ENCODE measurements at regions of chr10 and their contacts with region 1.

Region 1: GRCh38 chr10:119686439-119687191 is 35.4 kb downstream of the BAG3 start:
- DNase-seq: peak; percentile 94
- H3K4me3 ChIP-seq: peak overlapping the region in 2 of 3 experiments; percentile 20 to 26
- H3K27ac ChIP-seq: peak overlapping the region; percentile 88
- H3K4me1 ChIP-seq: peaks cover 13% of the 10 kb centered on the region
- H3K27me3 ChIP-seq: no peaks in the 10 kb centered on the region
- CTCF ChIP-seq: peak; percentile 89
- POLR2A ChIP-seq: peak; percentile 66

Region 2: DNA sequence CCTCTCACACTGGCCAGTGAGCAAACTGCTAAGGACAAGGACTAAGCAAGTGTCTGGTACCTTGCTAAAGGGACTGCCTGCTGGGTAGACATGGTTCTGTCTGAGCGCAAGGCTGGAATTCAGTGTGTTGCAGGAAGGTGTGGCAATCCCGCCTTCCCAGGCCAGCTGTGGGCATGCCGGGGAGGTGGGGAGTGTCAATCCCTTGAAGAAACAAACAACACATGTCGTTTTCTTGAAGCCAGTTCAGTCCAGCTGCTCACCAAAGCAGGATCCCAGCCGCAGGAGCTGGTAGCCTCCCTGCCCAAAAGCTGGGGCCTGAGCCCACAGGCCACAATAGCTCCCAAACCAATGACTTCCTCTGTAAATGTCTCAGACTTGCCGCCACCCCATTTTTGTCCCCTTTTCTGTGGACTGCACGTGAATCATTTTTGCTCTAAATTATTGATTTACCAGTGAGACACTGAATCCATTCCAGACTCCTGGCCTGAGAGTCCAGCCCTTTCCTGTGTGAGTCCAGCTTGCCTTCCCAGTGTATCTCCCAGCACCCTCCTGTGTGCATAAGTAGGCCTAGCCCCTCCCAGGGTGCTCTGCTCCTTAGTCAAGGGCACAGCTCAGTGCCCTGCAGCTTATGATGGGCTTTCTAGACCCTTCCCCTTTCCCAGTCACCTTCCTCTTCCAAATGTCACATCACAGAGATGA is 310.9 kb before region 1 on chr10:
- CTCF ChIA-PET with region 1: no interaction called
- POLR2A ChIA-PET with region 1: no interaction called
- dilution Hi-C with region 1: no loop called
- intact Hi-C with region 1: no loop called
- DNase-seq: peak; percentile 7
- H3K4me3 ChIP-seq: no peak overlapping the region
- H3K27ac ChIP-seq: no peak overlapping the region
- H3K4me1 ChIP-seq: peaks cover 9% of the 10 kb centered on the region
- H3K27me3 ChIP-seq: no peaks in the 10 kb centered on the region
- CTCF ChIP-seq: no peak
- POLR2A ChIP-seq: no peak

Region 3: GRCh38 chr10:119608316-119609155 is 78.1 kb before region 1 on chr10:
- CTCF ChIA-PET with region 1: interaction called, 5 read pairs
- POLR2A ChIA-PET with region 1: no interaction called
- dilution Hi-C with region 1: no loop called
- intact Hi-C with region 1: loop called (anchors 1 kb)
- DNase-seq: peak; percentile 42
- H3K4me3 ChIP-seq: no peak overlapping the region
- H3K27ac ChIP-seq: no peak overlapping the region
- H3K4me1 ChIP-seq: no peaks in the 10 kb centered on the region
- H3K27me3 ChIP-seq: no peaks in the 10 kb centered on the region
- CTCF ChIP-seq: peak; percentile 66 to 68
- POLR2A ChIP-seq: no peak

Region 4: GRCh38 chr10:119725828-119726675 is 39.4 kb after region 1 on chr10 and contains the start of gene INPP5F:
- CTCF ChIA-PET with region 1: interaction called, 48 read pairs
- POLR2A ChIA-PET with region 1: interaction called, 6 read pairs
- dilution Hi-C with region 1: no loop called
- intact Hi-C with region 1: loop called (anchors 1 kb)
- DNase-seq: peak; percentile 97
- H3K4me3 ChIP-seq: peak within 1 kb of the TSS; percentile 56 to 81 (median 74)
- H3K27ac ChIP-seq: peak within 1 kb of the TSS; percentile 80
- H3K4me1 ChIP-seq: peaks cover 20% of the 10 kb centered on the region
- H3K27me3 ChIP-seq: no peaks in the 10 kb centered on the region
- CTCF ChIP-seq: no peak
- POLR2A ChIP-seq: peak; percentile 68
- total RNA-seq, gene INPP5F: 20.3 and 26.6 TPM in 2 replicates

Region 5: DNA sequence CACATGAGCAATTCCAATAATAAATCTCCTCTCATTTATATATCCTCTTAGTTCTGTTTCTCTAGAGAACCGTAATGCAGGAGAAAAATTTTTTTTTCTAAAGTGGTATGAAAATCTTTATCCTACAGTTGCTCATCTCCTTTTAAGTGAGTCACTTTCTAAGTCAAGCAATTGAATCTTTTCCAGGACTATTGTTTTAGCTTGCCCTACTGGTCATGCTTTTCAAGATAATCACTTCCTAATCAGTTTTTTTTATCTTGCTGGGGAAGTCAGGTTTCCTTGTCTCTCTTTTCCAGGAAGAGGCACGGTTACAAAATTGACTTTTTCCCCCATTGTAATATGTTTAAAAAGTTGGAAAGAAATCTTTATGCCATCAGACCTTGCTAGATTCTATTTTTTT is 83.3 kb after region 1 on chr10:
- CTCF ChIA-PET with region 1: interaction called, 16 read pairs
- POLR2A ChIA-PET with region 1: no interaction called
- dilution Hi-C with region 1: no loop called
- intact Hi-C with region 1: loop called (anchors 2 kb)
- DNase-seq: peak; percentile 86
- H3K4me3 ChIP-seq: peak overlapping the region in 1 of 3 experiments; percentile 57
- H3K27ac ChIP-seq: peak overlapping the region; percentile 91
- H3K4me1 ChIP-seq: peaks cover 53% of the 10 kb centered on the region
- H3K27me3 ChIP-seq: no peaks in the 10 kb centered on the region
- CTCF ChIP-seq: no peak
- POLR2A ChIP-seq: peak; percentile 53

Region 6: DNA sequence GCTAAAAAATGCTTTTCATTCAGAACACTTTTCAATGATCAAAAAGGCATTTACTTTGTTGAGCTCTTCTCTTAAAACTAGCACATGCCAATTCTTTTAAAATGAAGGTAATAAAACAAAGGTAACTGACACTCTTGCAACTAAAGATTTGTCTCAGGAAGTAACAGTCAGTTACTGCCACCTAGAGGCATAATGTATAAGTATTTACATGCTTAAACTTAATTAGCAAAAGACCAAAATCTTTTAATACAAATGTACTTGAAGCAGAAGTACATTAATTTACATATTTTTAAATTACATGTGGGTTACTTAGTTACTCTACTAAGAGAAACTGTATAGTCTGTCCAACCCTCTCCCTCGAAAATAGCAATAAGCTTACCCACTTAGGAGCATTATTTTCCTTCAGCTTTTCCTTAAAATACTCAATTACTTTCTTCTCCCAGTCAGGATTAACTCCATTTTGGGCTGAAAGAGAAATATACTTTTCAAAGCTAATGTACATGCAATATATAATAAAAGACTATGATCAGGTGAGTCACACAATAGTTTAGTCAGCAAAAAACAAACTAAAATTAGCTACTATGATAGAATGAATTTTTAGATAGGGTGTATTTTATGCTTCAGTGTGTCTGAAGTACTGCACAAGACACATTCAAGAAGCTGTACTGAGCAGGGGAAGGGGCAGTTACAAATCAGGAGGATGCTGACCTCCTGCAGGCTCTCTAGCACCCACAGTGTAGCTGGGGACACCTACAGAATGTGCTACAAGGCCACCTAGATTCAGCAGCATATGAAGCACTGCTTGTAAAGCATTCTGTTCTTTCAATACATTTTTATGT is 173.0 kb after region 1 on chr10:
- CTCF ChIA-PET with region 1: interaction called, 85 read pairs
- POLR2A ChIA-PET with region 1: no interaction called
- dilution Hi-C with region 1: no loop called
- intact Hi-C with region 1: loop called (anchors 1 kb)
- DNase-seq: peak; percentile 74
- H3K4me3 ChIP-seq: no peak overlapping the region
- H3K27ac ChIP-seq: no peak overlapping the region
- H3K4me1 ChIP-seq: peaks cover 5% of the 10 kb centered on the region
- H3K27me3 ChIP-seq: no peaks in the 10 kb centered on the region
- CTCF ChIP-seq: peak; percentile 27 to 36
- POLR2A ChIP-seq: no peak

Region 7: DNA sequence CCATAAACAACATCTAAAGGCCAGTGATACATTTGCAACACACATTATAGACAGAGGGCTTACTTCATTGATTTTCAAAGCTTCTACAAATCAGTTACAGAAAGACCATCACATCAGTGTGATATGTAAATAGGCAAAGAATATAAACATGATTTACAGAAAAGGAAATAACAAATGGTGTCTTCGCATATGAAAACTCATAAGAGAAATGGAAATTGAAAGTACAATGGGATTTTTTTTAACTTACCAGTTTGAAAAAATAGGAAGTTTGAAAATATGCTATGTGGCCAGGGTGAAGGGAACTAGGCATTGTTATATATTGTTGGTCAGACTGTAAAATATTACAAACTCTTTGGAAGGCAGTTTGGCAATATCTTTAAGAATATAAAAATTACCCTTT is 233.2 kb after region 1 on chr10:
- CTCF ChIA-PET with region 1: interaction called, 3 read pairs
- POLR2A ChIA-PET with region 1: no interaction called
- dilution Hi-C with region 1: no loop called
- intact Hi-C with region 1: loop called (anchors 2 kb)
- DNase-seq: no peak
- H3K4me3 ChIP-seq: no peak overlapping the region
- H3K27ac ChIP-seq: no peak overlapping the region
- H3K4me1 ChIP-seq: no peaks in the 10 kb centered on the region
- H3K27me3 ChIP-seq: no peaks in the 10 kb centered on the region
- CTCF ChIP-seq: no peak
- POLR2A ChIP-seq: no peak

Region 8: GRCh38 chr10:120735773-120736371 is 1049.3 kb after region 1 on chr10:
- CTCF ChIA-PET with region 1: no interaction called
- POLR2A ChIA-PET with region 1: no interaction called
- dilution Hi-C with region 1: no loop called
- intact Hi-C with region 1: loop called (anchors 1 kb)
- DNase-seq: peak; percentile 60
- H3K4me3 ChIP-seq: no peak overlapping the region
- H3K27ac ChIP-seq: peak overlapping the region; percentile 81
- H3K4me1 ChIP-seq: peaks cover 39% of the 10 kb centered on the region
- H3K27me3 ChIP-seq: no peaks in the 10 kb centered on the region
- CTCF ChIP-seq: peak; percentile 50 to 53
- POLR2A ChIP-seq: no peak

Region 9: DNA sequence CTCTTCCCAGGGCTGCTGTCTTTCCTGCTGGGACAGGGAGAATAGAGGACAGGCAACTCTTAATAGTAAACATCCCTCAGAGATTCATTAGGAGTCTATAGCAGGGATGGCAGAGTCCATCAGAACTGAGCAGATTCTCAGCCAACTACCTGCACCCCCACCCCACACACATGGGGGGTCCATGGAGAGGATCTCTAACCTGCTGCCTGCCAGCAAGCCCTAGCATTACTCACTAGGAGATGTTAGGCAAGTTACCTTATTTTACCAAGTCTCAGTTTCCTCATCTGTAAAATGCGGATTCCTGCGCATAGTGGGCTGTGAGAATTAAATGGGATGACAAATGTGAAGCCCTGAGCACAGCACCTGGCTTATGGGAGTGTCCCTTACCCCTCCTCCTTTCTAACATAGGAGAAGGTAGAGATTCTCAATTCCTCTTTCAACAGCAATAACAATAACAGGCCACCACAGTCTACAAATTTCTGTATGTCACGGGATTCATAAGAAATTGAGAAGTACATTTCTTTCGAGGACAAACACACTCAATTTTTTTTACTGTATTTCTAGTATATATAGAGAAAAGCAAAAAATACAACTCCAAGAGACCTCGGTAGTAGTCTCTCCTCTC is 1140.7 kb after region 1 on chr10:
- CTCF ChIA-PET with region 1: no interaction called
- POLR2A ChIA-PET with region 1: no interaction called
- dilution Hi-C with region 1: no loop called
- intact Hi-C with region 1: no loop called
- DNase-seq: no peak
- H3K4me3 ChIP-seq: no peak overlapping the region
- H3K27ac ChIP-seq: no peak overlapping the region
- H3K4me1 ChIP-seq: no peaks in the 10 kb centered on the region
- H3K27me3 ChIP-seq: peaks cover 0 to 2% of the 10 kb centered on the region in 2 experiments
- CTCF ChIP-seq: no peak
- POLR2A ChIP-seq: no peak